GM10248 (cell line): ENCODE measurements at regions of chr3 and their contacts with region 1.

Region 1: GRCh38 chr3:12719984-12720898 is 38.8 kb downstream of the TMEM40 start:
- DNase-seq: peak; percentile 84
- CTCF ChIP-seq: peak; percentile 94

Region 2: DNA sequence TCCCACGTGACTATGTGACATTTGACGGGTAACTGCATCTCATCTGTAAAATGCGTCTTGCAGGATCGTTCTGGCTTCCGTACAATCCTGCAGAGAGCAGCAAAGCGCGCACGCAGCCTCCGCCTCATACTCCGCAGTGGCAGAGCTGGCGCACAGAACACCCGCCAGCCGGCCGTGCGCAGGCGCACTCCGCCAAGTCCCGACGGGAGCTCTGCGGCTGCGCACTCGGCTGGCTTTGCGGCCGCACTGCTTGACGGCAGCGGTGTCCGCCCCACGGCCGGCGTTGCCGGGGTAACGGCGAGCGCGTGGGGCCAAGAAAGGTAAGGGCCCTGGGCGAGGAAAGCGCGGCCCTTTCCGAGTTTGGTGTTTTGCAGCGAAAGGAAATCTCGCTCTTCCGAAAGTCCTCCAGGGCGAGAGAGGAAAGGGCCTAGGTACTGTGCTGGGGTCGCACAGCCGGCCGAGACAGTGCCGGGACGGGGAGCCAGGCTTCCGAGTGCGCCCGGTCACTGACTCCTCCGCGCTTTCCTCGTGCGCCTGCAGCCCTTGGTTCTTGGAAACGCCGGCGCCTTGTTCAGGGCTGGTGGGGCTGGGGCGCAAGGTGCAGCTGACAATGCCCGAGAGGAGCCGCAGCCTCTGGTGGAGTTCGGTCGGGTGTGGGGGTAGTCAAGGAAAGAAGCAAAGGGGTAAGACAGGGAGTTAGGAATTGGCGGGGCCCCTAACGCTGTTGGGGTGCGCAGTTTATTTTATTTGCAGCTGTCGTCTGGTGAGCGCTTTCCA is 235.9 kb before region 1 on chr3 and contains the start of gene TSEN2:
- CTCF ChIA-PET with region 1: interaction called, 14 read pairs
- POLR2A ChIA-PET with region 1: no interaction called
- DNase-seq: peak; percentile 99
- CTCF ChIP-seq: peak; percentile 37

Region 3: GRCh38 chr3:12700800-12701199 is 19.4 kb before region 1 on chr3:
- CTCF ChIA-PET with region 1: interaction called, 18 read pairs
- POLR2A ChIA-PET with region 1: no interaction called
- DNase-seq: no peak
- CTCF ChIP-seq: no peak

Region 4: GRCh38 chr3:12706504-12707253 is 13.6 kb before region 1 on chr3:
- CTCF ChIA-PET with region 1: interaction called, 22 read pairs
- POLR2A ChIA-PET with region 1: no interaction called
- DNase-seq: peak; percentile 76
- CTCF ChIP-seq: peak; percentile 89

Region 5: DNA sequence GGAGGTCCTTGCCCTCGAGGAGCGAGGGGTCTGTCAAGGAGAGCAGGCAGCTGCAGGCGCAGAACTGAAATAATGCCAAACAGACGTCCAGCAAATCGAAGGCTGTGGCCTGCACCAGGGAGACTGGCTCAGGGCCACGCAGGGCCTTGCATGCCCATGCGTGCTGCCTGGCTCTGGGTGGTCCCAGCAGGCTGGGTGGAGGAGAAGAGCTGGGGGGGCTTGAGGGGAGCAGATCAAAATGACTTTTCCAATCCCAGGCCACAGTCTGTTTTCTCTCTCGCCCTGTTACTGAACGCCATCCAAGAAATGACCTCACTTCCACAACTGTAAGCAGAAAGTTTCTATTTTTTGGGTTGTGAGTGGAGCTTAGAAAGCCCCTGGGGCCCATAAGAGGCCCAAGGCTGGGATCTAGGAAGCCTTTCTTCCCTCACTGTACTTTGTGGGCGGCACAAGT is 218.0 kb after region 1 on chr3:
- CTCF ChIA-PET with region 1: no interaction called
- POLR2A ChIA-PET with region 1: no interaction called
- DNase-seq: no peak
- CTCF ChIP-seq: no peak